ENCODE measurements at regions of chr12 and their contacts with region 1.

Region 1: DNA sequence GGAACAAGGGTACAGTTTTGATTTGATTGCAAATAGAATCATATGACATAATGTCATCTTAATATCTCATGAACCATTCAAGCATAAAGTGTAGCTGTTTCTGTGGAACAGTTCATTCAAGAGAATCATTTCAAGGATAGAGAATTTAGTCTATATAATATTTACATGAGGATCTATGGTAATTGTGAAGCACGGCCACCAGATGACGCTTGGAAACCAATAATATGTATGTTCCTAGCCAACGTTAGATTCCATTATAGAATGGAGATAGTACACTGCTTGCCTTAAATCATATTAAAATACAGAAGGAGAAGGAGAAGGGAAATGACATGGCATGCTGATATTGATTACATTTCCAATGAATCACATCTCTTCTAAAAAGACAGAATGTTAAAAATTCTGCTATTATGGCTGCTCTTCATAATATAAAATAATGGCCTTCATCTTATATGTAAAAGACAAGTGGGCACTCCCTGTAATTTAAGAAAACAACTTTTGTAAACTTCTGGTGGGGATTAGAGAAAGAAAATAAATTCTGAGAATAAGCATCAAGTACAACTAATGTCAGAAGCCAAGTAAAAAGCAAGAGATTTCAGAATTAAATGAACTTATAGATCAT is 351.0 kb downstream of the NAV3 start:
- DNase-seq: no peak
- ATAC-seq: peak; percentile 82; the same call in 1 of the 2 replicates
- H3K4me3 ChIP-seq: no peak overlapping the region
- H3K27ac ChIP-seq: no peak overlapping the region
- H3K4me1 ChIP-seq: no peaks in the 10 kb centered on the region
- H3K27me3 ChIP-seq: no peaks in the 10 kb centered on the region
- CTCF ChIP-seq: peak; percentile 81; the same call in 1 of the 2 replicates

Region 2: DNA sequence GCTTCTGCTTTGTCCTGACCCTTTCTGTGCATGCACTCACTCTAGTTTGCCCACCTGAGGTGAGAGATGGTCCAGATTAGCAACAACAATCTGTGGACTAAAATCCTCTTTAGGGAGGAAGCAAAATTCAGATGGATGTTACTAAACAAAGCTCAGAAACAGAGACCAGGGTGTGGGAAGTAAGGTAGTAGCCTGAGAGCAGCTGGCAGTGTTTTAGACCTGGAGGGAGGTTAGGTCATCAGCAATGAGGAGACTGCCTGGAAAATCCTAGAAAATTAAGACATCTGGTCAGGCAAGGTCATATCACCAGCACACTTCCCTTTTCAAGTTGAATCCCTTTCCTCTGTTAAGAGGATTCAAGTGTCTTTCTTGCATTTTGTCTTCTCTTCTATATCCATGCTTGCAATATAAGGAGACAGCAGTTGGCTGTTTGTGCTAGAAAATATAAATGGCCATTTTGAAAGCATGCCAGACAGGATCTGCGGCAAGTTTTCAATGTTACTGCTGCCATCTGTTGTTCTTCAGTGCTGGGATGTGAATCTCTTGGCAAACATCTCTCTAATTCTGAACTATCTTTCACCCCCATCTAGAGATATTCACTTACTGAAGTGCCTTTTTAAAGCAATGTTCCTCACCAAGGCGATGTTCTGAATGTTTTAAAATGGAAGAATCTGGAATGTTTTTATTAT is 84.6 kb before region 1 on chr12:
- CTCF ChIA-PET with region 1: no interaction called
- POLR2A ChIA-PET with region 1: no interaction called
- in situ Hi-C with region 1: no loop called
- intact Hi-C with region 1: no loop called
- DNase-seq: no peak
- ATAC-seq: no peak
- H3K4me3 ChIP-seq: no peak overlapping the region
- H3K27ac ChIP-seq: no peak overlapping the region
- H3K4me1 ChIP-seq: no peaks in the 10 kb centered on the region
- H3K27me3 ChIP-seq: no peaks in the 10 kb centered on the region
- CTCF ChIP-seq: no peak

Region 3: GRCh38 chr12:78157199-78157598 is 24.5 kb before region 1 on chr12:
- CTCF ChIA-PET with region 1: no interaction called
- POLR2A ChIA-PET with region 1: no interaction called
- in situ Hi-C with region 1: no loop called
- intact Hi-C with region 1: no loop called
- DNase-seq: no peak
- ATAC-seq: no peak
- H3K4me3 ChIP-seq: no peak overlapping the region
- H3K27ac ChIP-seq: no peak overlapping the region
- H3K4me1 ChIP-seq: no peaks in the 10 kb centered on the region
- H3K27me3 ChIP-seq: no peaks in the 10 kb centered on the region
- CTCF ChIP-seq: no peak

Region 4: DNA sequence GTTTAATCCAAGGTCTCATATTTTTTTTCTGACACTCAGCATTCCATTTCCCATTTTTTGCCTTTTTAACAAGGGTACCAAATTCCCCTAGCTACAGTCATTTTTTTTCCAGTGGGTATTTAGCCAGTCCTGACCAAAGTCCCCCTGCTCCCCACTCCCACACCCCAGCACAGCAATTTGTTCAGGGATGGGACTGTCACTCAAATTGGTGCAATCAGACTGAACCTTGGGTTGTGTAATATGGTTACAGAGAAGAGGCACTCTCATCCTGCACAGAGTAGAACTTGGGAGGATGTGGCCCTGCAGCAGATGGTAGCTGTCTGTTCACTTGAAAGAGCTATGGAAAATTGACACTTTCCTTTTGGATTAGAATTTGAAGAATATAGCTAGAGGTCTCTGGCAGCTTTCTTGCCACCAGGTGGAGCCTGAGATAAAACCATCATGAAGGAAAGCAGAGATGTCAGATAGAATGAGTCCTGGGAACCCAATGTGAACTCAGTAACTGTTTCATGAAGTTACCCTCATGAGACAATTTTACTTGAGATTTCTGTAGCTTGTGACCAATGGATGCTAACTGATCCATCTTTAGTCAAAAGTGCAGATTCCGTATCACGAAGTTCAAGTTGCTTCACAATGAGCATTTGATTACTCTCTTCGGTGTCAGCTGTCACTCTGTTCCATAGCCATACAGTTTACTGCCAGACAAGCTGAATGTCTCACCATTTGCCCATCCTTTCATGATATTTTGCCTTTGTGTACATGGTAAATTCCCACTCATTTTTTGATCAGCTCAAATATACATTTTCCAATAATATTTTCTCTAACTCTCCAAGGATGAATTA is 288.9 kb after region 1 on chr12:
- CTCF ChIA-PET with region 1: no interaction called
- POLR2A ChIA-PET with region 1: no interaction called
- in situ Hi-C with region 1: no loop called
- intact Hi-C with region 1: loop called (anchors 5 kb)
- DNase-seq: peak; percentile 32
- ATAC-seq: peak; percentile 84
- H3K4me3 ChIP-seq: no peak overlapping the region
- H3K27ac ChIP-seq: no peak overlapping the region
- H3K4me1 ChIP-seq: no peaks in the 10 kb centered on the region
- H3K27me3 ChIP-seq: no peaks in the 10 kb centered on the region
- CTCF ChIP-seq: peak; percentile 74

Region 5: GRCh38 chr12:78584695-78585531 is 403.3 kb after region 1 on chr12:
- CTCF ChIA-PET with region 1: no interaction called
- POLR2A ChIA-PET with region 1: no interaction called
- in situ Hi-C with region 1: no loop called
- intact Hi-C with region 1: loop called (anchors 10 kb)
- DNase-seq: no peak
- ATAC-seq: no peak
- H3K4me3 ChIP-seq: no peak overlapping the region
- H3K27ac ChIP-seq: no peak overlapping the region
- H3K4me1 ChIP-seq: no peaks in the 10 kb centered on the region
- H3K27me3 ChIP-seq: no peaks in the 10 kb centered on the region
- CTCF ChIP-seq: peak; percentile 36

Region 6: GRCh38 chr12:79174626-79175025 is 993.0 kb after region 1 on chr12:
- CTCF ChIA-PET with region 1: no interaction called
- POLR2A ChIA-PET with region 1: no interaction called
- in situ Hi-C with region 1: no loop called
- intact Hi-C with region 1: loop called (anchors 5 kb)
- DNase-seq: no peak
- ATAC-seq: no peak; the same call in 1 of the 2 replicates
- H3K4me3 ChIP-seq: no peak overlapping the region
- H3K27ac ChIP-seq: no peak overlapping the region
- H3K4me1 ChIP-seq: no peaks in the 10 kb centered on the region
- H3K27me3 ChIP-seq: no peaks in the 10 kb centered on the region
- CTCF ChIP-seq: peak; percentile 43; the same call in 1 of the 2 replicates

Measured in Panc1 (cell line).